Motor neuron (in vitro differentiated cells): ENCODE measurements at regions of chr12 and their contacts with region 1.

Region 1: DNA sequence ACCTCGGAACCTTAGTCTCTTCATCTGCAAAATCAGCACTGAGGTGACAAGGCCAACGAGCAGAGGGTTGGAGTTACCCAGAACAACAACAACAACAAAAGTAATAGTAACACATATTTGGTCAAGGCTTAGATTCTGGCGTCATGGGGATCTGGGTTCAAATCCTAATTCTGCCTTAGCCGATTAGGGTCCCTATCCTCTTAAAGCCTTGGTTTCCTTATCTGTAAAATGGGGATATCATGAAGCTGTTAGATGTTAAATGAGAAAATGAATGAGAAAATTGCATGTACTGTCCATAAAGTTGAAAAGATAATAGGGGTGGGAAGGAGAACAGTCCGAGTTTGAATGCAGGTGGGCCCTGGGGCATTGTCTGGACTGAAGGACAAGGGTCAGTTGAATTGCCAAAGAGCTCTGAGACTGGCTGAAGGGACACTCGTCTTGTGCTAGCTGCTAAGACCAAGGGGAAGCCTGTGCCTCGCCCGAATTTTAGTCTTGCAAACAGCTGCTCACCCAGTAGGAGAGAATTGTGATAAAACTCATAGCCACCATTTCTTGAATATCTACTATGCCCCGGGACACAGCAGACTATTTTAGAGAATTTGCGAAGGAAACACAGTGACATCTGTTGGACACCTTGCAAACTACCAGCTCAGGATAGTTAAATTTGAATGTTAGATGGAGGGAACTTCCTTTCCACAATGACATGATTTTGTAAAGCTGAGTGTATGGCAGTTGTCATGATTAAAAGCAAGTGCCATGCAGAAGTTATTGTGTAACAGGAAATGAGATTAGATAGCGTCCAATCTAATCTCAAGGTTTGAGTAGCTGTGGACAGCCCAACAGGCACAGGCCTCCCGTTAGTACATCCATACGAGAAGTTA is 6.8 kb upstream of the HNF1A start:
- ATAC-seq: peak in 3 of 8 experiments; percentile 84 to 93 (median 92)
- H3K4me3 ChIP-seq: no peak overlapping the region
- H3K27ac ChIP-seq: no peak overlapping the region
- H3K4me1 ChIP-seq: peaks cover 0 to 6% of the 10 kb centered on the region in 2 donors

Region 2: GRCh38 chr12:119911182-119911581 is 1060.4 kb before region 1 on chr12:
- in situ Hi-C with region 1: no loop called
- ATAC-seq: no peak
- H3K4me3 ChIP-seq: no peak overlapping the region
- H3K27ac ChIP-seq: no peak overlapping the region
- H3K4me1 ChIP-seq: no peaks in the 10 kb centered on the region

Region 3: GRCh38 chr12:120640840-120641833 is 330.4 kb before region 1 on chr12:
- in situ Hi-C with region 1: loop called in 1 of 9 experiments (anchors 25 kb)
- ATAC-seq: peak; percentile 58 to 97 (median 67)
- H3K4me3 ChIP-seq: peak overlapping the region; percentile 38 to 55 (median 46)
- H3K27ac ChIP-seq: no peak overlapping the region
- H3K4me1 ChIP-seq: peaks cover 0 to 4% of the 10 kb centered on the region in 2 donors

Region 4: GRCh38 chr12:120725659-120726509 is 245.7 kb before region 1 on chr12 and contains the start of gene ACADS:
- in situ Hi-C with region 1: loop called in 1 of 9 experiments (anchors 25 kb)
- ATAC-seq: peak; percentile 94 to 99 (median 98)
- H3K4me3 ChIP-seq: peak within 1 kb of the TSS; percentile 36 to 55 (median 50)
- H3K27ac ChIP-seq: peak within 1 kb of the TSS in 1 of 2 donors; percentile 5
- H3K4me1 ChIP-seq: peaks cover 9 to 10% of the 10 kb centered on the region in 2 donors
- total RNA-seq, gene ACADS: 5.3 to 18.9 (median 7.3) TPM